RWPE1 (cell line): ENCODE measurements at regions of chr11 and their contacts with region 1.

Region 1: GRCh38 chr11:19903620-19904069 is 191.0 kb downstream of the NAV2 start:
- DNase-seq: peak; percentile 65
- H3K27ac ChIP-seq: no peak overlapping the region
- CTCF ChIP-seq: peak; percentile 86

Region 2: GRCh38 chr11:19561011-19561410 is 342.6 kb before region 1 on chr11:
- CTCF ChIA-PET with region 1: interaction called, 11 read pairs
- POLR2A ChIA-PET with region 1: no interaction called
- DNase-seq: no peak
- H3K27ac ChIP-seq: no peak overlapping the region
- CTCF ChIP-seq: no peak

Region 3: GRCh38 chr11:19742588-19743292 is 160.9 kb before region 1 on chr11:
- CTCF ChIA-PET with region 1: interaction called, 20 read pairs
- POLR2A ChIA-PET with region 1: no interaction called
- DNase-seq: peak; percentile 53
- H3K27ac ChIP-seq: no peak overlapping the region
- CTCF ChIP-seq: peak; percentile 83

Region 4: DNA sequence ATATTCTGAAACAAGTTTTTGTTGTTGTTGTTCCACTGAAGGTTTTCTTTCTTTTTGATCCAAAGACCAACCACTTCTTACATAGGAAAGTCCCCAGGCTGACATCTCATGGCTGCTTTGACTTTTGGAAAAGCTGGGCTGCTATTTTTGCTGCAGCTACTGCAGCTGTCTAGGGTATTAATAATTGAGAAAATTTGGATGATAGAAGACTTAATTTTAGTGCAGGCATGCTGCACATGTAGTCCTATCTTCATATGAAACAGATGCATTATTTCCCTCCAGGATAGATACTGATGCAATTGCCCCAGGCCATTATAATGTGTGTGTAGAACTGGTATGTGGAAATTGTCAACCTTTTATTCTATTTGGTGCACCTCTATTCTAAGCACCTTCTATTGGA is 59.6 kb before region 1 on chr11:
- CTCF ChIA-PET with region 1: no interaction called
- POLR2A ChIA-PET with region 1: no interaction called
- DNase-seq: no peak
- H3K27ac ChIP-seq: no peak overlapping the region
- CTCF ChIP-seq: no peak

Region 5: GRCh38 chr11:20022363-20023081 is 118.9 kb after region 1 on chr11:
- CTCF ChIA-PET with region 1: no interaction called
- POLR2A ChIA-PET with region 1: no interaction called
- DNase-seq: no peak
- H3K27ac ChIP-seq: peak overlapping the region; percentile 91
- CTCF ChIP-seq: no peak